WTC11 (cell line): ENCODE measurements at regions of chr2 and their contacts with region 1.

Region 1: DNA sequence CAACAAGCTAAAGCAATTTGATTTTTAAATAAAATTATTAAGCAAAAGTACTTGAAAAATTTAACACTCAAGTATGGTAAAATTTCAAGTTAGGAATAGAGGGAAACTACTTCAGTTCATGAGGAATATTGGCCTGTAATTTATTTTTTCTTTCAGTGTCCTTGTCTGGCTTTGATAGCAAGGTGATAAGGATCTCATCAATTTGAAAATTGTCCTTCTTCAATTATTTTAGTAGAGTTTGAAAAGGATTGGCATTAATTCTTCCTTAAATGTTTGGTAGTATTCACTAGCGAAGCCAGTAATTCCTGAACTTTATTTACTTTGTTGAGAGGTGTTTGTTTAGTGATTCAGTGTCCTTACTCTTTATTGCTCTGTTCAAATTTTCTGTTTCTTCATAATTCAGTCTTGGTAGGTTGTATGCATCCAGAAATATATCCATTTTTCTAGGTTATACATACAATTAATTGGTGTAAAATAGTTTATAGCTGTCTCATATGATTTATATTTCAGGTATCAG is 676.8 kb upstream of the POU3F3 start:
- DNase-seq: no peak
- ATAC-seq: no peak
- H3K4me3 Mint-ChIP-seq: no peak overlapping the region
- H3K27ac Mint-ChIP-seq: no peak overlapping the region
- H3K4me1 Mint-ChIP-seq: no peaks in the 10 kb centered on the region
- H3K27me3 Mint-ChIP-seq: no peaks in the 10 kb centered on the region
- CTCF ChIP-seq: no peak

Region 2: GRCh38 chr2:104046461-104047257 is 130.4 kb before region 1 on chr2:
- CTCF ChIA-PET with region 1: no interaction called
- POLR2A ChIA-PET with region 1: interaction called, 15 read pairs
- DNase-seq: no peak
- ATAC-seq: no peak
- H3K4me3 Mint-ChIP-seq: no peak overlapping the region
- H3K27ac Mint-ChIP-seq: no peak overlapping the region
- H3K4me1 Mint-ChIP-seq: peaks cover 14% of the 10 kb centered on the region
- H3K27me3 Mint-ChIP-seq: no peaks in the 10 kb centered on the region
- CTCF ChIP-seq: no peak

Region 3: GRCh38 chr2:104111226-104111625 is 65.9 kb before region 1 on chr2:
- CTCF ChIA-PET with region 1: no interaction called
- POLR2A ChIA-PET with region 1: no interaction called
- DNase-seq: no peak
- ATAC-seq: no peak
- H3K4me3 Mint-ChIP-seq: no peak overlapping the region
- H3K27ac Mint-ChIP-seq: no peak overlapping the region
- H3K4me1 Mint-ChIP-seq: no peaks in the 10 kb centered on the region
- H3K27me3 Mint-ChIP-seq: no peaks in the 10 kb centered on the region
- CTCF ChIP-seq: no peak